Keratinocyte (primary cell): ENCODE measurements at regions of chr16 and their contacts with region 1.

Region 1: DNA sequence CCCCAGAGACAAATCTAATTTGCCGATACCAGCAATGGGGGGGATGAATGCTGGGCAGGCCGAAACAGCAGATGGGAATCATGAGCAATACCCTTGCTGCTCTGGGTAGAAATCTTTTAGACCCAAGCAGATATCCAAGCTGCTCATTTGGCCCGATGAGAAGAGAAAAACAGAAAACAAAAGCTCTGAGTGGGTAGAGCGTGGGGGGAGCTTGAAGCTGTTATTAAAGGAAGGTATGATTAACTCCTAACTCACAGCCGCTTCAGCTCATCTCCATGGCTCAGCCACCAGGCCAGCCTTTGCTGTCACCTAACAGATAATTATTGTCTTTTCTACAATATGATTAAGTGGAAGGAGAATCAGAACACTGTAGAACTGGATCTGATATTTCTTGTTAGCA is 58.3 kb downstream of the VPS35L start:
- DNase-seq: no peak
- H3K4me3 ChIP-seq: no peak overlapping the region
- H3K27ac ChIP-seq: no peak overlapping the region
- H3K4me1 ChIP-seq: no peaks in the 10 kb centered on the region
- H3K27me3 ChIP-seq: no peaks in the 10 kb centered on the region
- CTCF ChIP-seq: no peak

Region 2: GRCh38 chr16:19886073-19886941 is 272.5 kb after region 1 on chr16:
- dilution Hi-C with region 1: loop called (anchors 10 kb)
- DNase-seq: no peak
- H3K4me3 ChIP-seq: peak overlapping the region in 1 of 3 experiments; percentile 50
- H3K27ac ChIP-seq: no peak overlapping the region
- H3K4me1 ChIP-seq: peaks cover 11% of the 10 kb centered on the region
- H3K27me3 ChIP-seq: peaks cover 36% of the 10 kb centered on the region
- CTCF ChIP-seq: peak; percentile 99 to 100 (median 100)